Activated T-helper 2 cell treated with anti-CD3 and anti-CD28 coated beads, Interferon-gamma antibody, Interleukin-2, Interleukin-4, amounts not matched to agents 10 μg/mL and 5 μg/mL and 100 μg/mL, durations not matched to agents 14 hours and 24 hours and 36 hours (primary cell): ENCODE measurements at regions of chr16 and their contacts with region 1.

Region 1: GRCh38 chr16:74606521-74607310 is at the start of gene GLG1:
- DNase-seq: peak; percentile 87
- H3K4me3 Mint-ChIP-seq: peak within 1 kb of the TSS; percentile 99
- H3K27ac Mint-ChIP-seq: peak within 1 kb of the TSS; percentile 85
- H3K4me1 Mint-ChIP-seq: peaks cover 55% of the 10 kb centered on the region
- H3K27me3 Mint-ChIP-seq: peaks cover 7% of the 10 kb centered on the region
- total RNA-seq, gene GLG1: 49.7 and 50.2 TPM in 2 replicates

Region 2: DNA sequence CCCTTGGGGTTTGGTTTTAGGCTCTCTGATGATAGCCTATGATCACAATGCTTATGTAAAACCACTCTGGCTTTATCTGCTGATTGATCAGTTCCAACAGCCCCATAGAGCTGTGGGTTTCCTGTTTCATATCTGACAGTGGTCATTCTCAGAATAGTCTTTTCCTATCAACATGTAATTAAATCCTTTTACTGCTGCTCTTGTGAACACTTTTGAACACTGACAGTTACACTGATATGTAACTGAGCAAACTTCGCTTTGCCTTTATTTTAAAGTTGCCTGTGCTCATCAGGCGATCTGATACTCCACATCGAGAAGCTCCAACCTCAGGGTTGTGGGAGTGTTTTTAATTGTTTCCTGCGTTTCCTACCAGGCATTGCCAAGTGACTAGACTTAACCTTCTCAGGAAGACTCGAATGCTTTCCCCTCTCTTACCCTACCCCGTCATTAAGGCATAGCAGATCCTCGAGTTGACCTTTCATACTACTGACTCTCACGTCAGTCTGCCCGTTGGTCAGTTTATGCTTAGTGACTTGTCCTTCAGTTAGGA is 168.1 kb before region 1 on chr16:
- intact Hi-C with region 1: loop called (anchors 5 kb)
- DNase-seq: peak; percentile 18
- H3K4me3 Mint-ChIP-seq: peak overlapping the region; percentile 13
- H3K27ac Mint-ChIP-seq: no peak overlapping the region
- H3K4me1 Mint-ChIP-seq: peaks cover 20% of the 10 kb centered on the region
- H3K27me3 Mint-ChIP-seq: peaks cover 16% of the 10 kb centered on the region

Region 3: GRCh38 chr16:74492976-74493375 is 113.7 kb before region 1 on chr16:
- intact Hi-C with region 1: loop called (anchors 2 kb)
- DNase-seq: no peak
- H3K4me3 Mint-ChIP-seq: no peak overlapping the region
- H3K27ac Mint-ChIP-seq: no peak overlapping the region
- H3K4me1 Mint-ChIP-seq: no peaks in the 10 kb centered on the region
- H3K27me3 Mint-ChIP-seq: no peaks in the 10 kb centered on the region

Region 4: DNA sequence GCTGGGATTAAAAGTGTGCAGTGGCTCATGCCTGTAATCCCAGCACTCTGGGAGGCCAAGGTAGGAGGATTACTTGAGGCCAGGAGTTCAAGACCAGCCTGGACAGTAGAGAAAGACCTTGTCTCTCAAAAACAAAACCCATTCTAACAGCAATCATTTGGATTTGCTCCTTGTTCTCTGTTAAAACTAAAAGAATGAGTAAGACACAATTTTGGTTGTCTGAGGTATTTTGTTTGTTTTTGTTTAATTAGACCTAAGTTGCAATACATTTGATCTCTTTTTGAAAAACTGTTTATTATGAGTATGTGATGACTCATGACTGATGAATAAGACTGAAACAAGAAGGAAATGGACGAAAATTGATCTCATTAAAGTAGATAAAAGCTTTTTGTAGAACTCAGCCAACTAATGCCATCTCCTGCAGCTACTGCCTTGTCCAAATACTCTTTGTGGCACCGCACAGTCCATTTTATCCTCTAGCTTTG is 28.8 kb before region 1 on chr16:
- intact Hi-C with region 1: loop called (anchors 1 kb)
- DNase-seq: no peak
- H3K4me3 Mint-ChIP-seq: no peak overlapping the region
- H3K27ac Mint-ChIP-seq: peak overlapping the region; percentile 0
- H3K4me1 Mint-ChIP-seq: peaks cover 28% of the 10 kb centered on the region
- H3K27me3 Mint-ChIP-seq: no peaks in the 10 kb centered on the region

Region 5: DNA sequence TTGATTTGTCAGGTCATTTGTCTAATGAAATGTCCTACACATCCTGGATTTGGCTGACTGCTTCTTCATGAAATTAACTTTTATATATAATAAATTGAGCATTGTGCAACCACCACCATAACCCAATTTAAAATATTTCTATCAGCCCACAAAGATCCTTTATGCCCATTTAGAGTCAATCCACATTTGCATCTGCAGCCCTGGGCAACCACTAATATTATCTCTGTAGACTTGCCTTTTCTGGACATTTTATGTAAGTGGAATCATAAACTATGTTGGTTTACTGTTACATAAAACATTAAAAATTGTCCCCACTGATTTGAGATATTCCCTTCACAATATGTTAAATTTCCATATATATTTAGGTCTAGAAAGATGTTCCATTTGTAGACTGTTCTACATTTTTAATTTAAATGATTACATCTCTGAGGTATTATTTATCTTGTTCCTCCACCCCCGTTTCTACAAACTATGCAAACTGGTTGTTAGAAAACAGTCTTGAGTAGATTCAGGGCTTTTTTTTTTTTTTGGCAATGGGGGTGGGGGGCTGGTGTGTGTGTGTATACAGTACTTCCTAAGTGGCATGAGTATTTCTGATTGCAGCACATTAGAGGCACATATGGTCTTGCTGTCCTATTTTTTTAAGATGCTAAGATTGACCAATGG is 43.3 kb after region 1 on chr16:
- intact Hi-C with region 1: no loop called
- DNase-seq: no peak
- H3K4me3 Mint-ChIP-seq: no peak overlapping the region
- H3K27ac Mint-ChIP-seq: no peak overlapping the region
- H3K4me1 Mint-ChIP-seq: peaks cover 16% of the 10 kb centered on the region
- H3K27me3 Mint-ChIP-seq: no peaks in the 10 kb centered on the region

Region 6: GRCh38 chr16:74666425-74667254 is 59.9 kb after region 1 on chr16 and contains the start of gene RFWD3:
- intact Hi-C with region 1: loop called (anchors 1 kb)
- DNase-seq: peak; percentile 95
- H3K4me3 Mint-ChIP-seq: peak within 1 kb of the TSS; percentile 91
- H3K27ac Mint-ChIP-seq: peak within 1 kb of the TSS; percentile 86
- H3K4me1 Mint-ChIP-seq: peaks cover 37% of the 10 kb centered on the region
- H3K27me3 Mint-ChIP-seq: no peaks in the 10 kb centered on the region
- total RNA-seq, gene RFWD3: 94.5 and 101 TPM in 2 replicates